ENCODE measurements at regions of chr20 and their contacts with region 1.

Region 1: GRCh38 chr20:44747166-44748004 is 1.7 kb downstream of the KCNK15 start:
- DNase-seq: peak; percentile 98
- H3K4me3 Mint-ChIP-seq: peak overlapping the region; percentile 39
- H3K27ac Mint-ChIP-seq: peak overlapping the region; percentile 77
- H3K4me1 Mint-ChIP-seq: peaks cover 20% of the 10 kb centered on the region
- H3K27me3 Mint-ChIP-seq: peaks cover 47% of the 10 kb centered on the region
- CTCF ChIP-seq: peak; percentile 63

Region 2: GRCh38 chr20:44422083-44422482 is 325.3 kb before region 1 on chr20:
- CTCF ChIA-PET with region 1: no interaction called
- POLR2A ChIA-PET with region 1: no interaction called
- intact Hi-C with region 1: no loop called
- DNase-seq: peak; percentile 64
- H3K4me3 Mint-ChIP-seq: no peak overlapping the region
- H3K27ac Mint-ChIP-seq: no peak overlapping the region
- H3K4me1 Mint-ChIP-seq: peaks cover 6% of the 10 kb centered on the region
- H3K27me3 Mint-ChIP-seq: no peaks in the 10 kb centered on the region
- CTCF ChIP-seq: no peak

Region 3: DNA sequence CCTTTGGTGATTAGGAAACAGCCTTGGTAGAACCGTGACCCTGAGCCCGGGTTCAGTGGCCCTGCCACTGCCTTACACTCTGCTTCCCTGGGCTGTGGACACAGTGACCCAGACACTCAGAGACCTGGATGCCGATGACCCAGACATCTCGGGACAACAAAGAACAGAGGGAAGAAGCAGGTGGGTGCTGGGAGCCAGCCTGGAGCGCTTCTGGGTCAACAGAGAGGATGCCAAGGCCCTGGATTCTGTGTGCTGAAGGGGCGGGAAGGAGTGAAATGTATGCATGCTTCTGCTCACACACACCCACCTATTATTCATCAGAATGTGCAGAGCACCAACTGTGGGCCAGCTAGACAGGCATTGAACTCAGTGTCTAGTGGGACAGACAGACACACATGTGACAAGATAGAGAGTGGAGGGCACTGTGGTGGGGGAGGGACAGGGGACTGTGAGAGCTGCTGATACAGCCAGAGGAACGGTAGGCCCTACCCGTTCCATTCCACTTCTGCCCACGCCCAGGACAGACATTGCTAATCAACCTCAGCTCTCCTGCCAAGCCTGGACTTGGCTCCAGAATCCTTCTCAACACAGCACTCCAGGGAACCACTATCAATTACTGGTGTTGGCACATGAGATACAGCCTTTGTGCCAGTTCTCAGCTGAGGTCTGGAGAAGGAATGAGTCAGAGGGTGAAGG is 18.4 kb after region 1 on chr20:
- CTCF ChIA-PET with region 1: interaction called, 45 read pairs
- POLR2A ChIA-PET with region 1: interaction called, 5 read pairs
- intact Hi-C with region 1: no loop called
- DNase-seq: peak; percentile 84
- H3K4me3 Mint-ChIP-seq: no peak overlapping the region
- H3K27ac Mint-ChIP-seq: no peak overlapping the region
- H3K4me1 Mint-ChIP-seq: peaks cover 12% of the 10 kb centered on the region
- H3K27me3 Mint-ChIP-seq: peaks cover 43% of the 10 kb centered on the region
- CTCF ChIP-seq: no peak

Region 4: DNA sequence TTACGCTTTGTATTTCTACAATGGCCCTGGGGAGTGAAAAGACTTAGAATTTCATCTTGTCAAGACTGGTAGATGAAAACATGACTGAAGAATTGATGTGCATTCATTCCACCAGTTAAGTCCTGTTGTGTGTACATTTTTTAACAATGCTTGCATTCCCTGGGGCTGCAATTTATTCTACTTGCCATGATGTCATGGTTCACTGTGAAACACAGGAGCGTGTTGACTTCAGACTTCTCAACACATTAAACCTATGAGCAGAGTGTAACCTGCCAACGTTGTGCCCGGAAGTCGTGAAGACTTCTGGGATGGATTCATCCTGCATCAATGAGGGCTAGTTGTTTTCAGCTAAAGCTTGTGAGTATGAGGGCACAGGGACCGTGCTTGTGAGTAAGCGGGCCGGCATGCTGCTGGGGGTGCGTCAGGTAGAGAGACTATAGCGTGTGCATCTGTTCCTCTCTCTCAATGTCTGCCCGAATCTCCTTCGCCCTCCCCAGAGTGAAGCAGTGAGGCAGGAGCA is 89.3 kb after region 1 on chr20:
- CTCF ChIA-PET with region 1: interaction called, 16 read pairs
- POLR2A ChIA-PET with region 1: no interaction called
- intact Hi-C with region 1: no loop called
- DNase-seq: no peak
- H3K4me3 Mint-ChIP-seq: no peak overlapping the region
- H3K27ac Mint-ChIP-seq: no peak overlapping the region
- H3K4me1 Mint-ChIP-seq: no peaks in the 10 kb centered on the region
- H3K27me3 Mint-ChIP-seq: peaks cover 34% of the 10 kb centered on the region
- CTCF ChIP-seq: no peak

Region 5: DNA sequence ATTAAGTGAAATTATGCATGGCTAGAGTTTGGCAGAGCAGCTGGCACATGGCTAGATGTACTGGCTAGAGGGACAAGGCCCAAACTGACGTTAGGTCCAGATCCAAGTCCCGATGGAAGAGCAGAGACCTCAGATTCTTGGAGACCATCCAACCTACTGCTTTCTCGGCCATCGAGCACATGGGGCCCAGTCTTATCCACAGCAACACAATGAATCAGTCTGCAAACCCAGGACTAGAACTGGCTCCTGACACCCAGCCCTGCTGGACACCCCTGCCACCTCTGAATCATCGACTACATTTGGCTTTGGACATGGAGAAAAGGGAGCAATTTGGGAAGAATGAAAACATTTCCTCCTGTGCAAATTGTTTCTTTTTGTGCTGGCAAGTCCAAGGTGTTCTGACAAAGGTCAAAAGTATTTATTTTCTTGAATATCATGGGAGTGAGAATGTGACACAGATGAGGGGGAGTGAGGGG is 114.2 kb after region 1 on chr20:
- CTCF ChIA-PET with region 1: interaction called, 102 read pairs
- POLR2A ChIA-PET with region 1: interaction called, 5 read pairs
- intact Hi-C with region 1: no loop called
- DNase-seq: peak; percentile 64
- H3K4me3 Mint-ChIP-seq: no peak overlapping the region
- H3K27ac Mint-ChIP-seq: no peak overlapping the region
- H3K4me1 Mint-ChIP-seq: peaks cover 16% of the 10 kb centered on the region
- H3K27me3 Mint-ChIP-seq: peaks cover 13% of the 10 kb centered on the region
- CTCF ChIP-seq: no peak

Region 6: DNA sequence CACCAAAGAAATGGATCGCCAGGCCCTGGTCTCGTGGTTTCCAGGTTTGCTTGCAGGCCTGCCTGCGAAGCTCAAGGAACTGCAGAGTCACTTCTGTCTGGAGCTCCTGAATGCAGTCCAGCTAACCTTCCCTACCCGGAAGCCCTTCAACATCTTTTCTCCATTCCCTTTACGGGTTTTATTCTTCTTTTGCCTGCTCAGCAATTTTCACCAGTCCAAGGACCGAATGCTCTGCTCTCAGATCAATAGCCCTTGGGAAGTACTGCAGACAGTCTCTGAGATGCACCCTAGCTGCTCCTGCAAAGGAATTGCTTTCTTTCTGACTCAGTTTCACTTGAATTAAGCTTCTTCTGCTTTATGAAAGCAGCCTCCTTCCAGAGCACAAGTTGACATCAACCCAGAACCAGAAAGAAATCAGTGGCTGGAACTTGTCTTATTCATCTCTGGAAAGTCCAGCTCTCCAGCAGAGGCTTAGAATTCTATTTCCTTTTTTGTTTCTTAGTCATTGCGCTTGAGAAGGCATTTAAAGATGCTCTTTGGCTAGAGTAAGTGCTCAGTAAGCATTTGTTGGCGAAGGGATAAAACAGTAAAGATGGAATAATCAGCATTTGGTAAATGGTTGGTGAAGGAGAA is 119.4 kb after region 1 on chr20:
- CTCF ChIA-PET with region 1: interaction called, 102 read pairs
- POLR2A ChIA-PET with region 1: interaction called, 5 read pairs
- intact Hi-C with region 1: loop called (anchors 1 kb)
- DNase-seq: no peak
- H3K4me3 Mint-ChIP-seq: no peak overlapping the region
- H3K27ac Mint-ChIP-seq: no peak overlapping the region
- H3K4me1 Mint-ChIP-seq: peaks cover 11% of the 10 kb centered on the region
- H3K27me3 Mint-ChIP-seq: peaks cover 32% of the 10 kb centered on the region
- CTCF ChIP-seq: no peak

Region 7: GRCh38 chr20:44997171-44998067 is 250.0 kb after region 1 on chr20:
- CTCF ChIA-PET with region 1: no interaction called
- POLR2A ChIA-PET with region 1: no interaction called
- intact Hi-C with region 1: no loop called
- DNase-seq: no peak
- H3K4me3 Mint-ChIP-seq: no peak overlapping the region
- H3K27ac Mint-ChIP-seq: no peak overlapping the region
- H3K4me1 Mint-ChIP-seq: peaks cover 5% of the 10 kb centered on the region
- H3K27me3 Mint-ChIP-seq: no peaks in the 10 kb centered on the region
- CTCF ChIP-seq: no peak